ENCODE measurements at regions of chr15 and their contacts with region 1.

Region 1: DNA sequence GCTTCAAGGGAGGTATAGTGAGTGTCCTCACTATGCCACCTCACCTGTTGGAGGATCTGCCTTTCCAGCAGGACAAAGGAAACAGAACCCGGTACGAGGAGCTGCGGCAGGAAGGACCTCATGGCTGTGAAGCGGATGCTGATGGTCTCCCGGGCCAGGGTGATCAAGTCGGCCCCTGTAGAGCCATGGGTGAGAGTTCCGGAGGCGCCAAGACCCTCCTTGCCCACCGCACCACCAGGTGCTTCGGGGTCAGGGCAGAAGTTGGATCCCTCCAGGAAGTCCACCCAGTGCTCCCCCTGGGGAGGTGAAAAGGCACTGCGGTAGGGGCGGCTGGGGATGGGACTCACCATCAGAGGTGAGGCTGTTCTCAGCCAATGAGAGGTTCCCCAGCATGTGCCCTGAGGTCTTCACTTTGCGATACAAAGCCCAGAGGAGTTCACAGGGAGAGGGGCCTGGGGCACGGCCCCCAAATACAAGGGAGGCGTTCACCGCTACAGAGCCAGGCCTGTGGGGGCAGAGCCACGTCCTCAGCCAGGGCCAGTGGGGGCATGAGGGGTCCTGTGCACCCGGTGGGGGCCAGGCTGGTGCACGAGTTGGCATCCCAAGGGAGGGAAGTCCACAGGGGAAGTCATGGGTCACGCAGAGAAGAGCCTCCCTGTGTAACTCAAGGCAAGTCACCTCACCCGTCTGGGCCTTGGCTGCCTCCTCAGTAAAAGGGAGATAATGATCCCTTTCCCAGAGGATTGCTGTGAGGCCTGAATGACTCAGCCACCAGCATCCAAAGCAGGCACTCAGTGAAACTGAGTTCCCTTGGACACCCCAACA is 27.7 kb downstream of the C15orf39 start:
- DNase-seq: peak; percentile 35 to 69
- ATAC-seq: no peak
- H3K4me3 ChIP-seq: no peak overlapping the region
- H3K27ac ChIP-seq: no peak overlapping the region
- H3K4me1 ChIP-seq: no peaks in the 10 kb centered on the region
- H3K27me3 ChIP-seq: no peaks in the 10 kb centered on the region

Region 2: DNA sequence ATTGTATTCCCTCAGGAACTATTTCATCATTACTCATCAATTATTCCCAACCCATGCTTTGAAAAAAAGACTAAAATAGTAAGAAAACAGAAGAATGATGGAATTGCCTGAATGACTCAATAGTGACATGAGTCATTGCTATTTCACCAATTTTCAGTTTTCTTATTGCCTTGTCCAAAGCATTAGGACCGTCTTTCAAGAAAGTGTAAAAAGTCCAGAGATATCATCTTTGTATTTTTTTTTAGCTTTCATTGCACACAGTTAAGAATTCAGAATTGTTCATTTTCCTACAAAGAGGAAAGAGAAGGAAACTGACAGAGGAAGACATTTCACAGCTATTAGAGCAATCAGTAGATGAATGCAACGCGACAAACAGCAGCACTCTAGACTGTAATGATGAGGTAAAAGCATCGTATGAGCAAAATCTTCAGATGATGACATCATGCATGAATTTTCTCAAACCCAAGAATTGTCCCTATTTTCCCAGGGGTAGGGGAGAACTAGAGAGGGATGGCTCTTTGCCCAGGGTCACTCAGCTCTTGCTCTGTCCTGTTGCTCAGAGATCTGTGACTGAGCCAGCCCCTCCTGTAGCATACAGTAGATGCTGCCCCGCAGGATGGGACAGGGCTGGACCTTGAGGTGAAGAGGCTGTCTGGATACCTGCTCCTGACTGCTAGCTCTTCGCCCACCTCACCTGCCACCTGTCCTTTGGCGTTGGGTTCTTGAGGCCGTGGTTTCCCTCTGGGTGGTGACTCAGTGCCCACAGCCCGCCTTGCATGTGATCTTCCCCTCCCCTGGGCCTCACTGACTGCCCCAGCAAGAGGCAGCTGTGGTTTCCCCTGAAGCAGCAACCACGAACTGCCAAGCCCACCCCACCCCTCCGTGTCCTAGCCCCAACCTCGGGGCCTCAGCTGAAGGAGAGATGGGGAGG is 121.2 kb before region 1 on chr15:
- intact Hi-C with region 1: no loop called
- DNase-seq: peak in 1 of 2 donors; percentile 66
- ATAC-seq: no peak
- H3K4me3 ChIP-seq: no peak overlapping the region
- H3K27ac ChIP-seq: no peak overlapping the region
- H3K4me1 ChIP-seq: no peaks in the 10 kb centered on the region
- H3K27me3 ChIP-seq: no peaks in the 10 kb centered on the region

Region 3: GRCh38 chr15:75195122-75195765 is 34.2 kb before region 1 on chr15:
- intact Hi-C with region 1: no loop called
- DNase-seq: no peak
- ATAC-seq: no peak
- H3K4me3 ChIP-seq: no peak overlapping the region
- H3K27ac ChIP-seq: no peak overlapping the region
- H3K4me1 ChIP-seq: no peaks in the 10 kb centered on the region
- H3K27me3 ChIP-seq: no peaks in the 10 kb centered on the region

Region 4: GRCh38 chr15:75309711-75310110 is 80.3 kb after region 1 on chr15:
- intact Hi-C with region 1: loop called in 1 of 2 experiments (anchors 10 kb)
- DNase-seq: no peak
- ATAC-seq: no peak
- H3K4me3 ChIP-seq: no peak overlapping the region
- H3K27ac ChIP-seq: no peak overlapping the region
- H3K4me1 ChIP-seq: no peaks in the 10 kb centered on the region
- H3K27me3 ChIP-seq: peaks cover 0 to 2% of the 10 kb centered on the region in 2 donors

Region 5: DNA sequence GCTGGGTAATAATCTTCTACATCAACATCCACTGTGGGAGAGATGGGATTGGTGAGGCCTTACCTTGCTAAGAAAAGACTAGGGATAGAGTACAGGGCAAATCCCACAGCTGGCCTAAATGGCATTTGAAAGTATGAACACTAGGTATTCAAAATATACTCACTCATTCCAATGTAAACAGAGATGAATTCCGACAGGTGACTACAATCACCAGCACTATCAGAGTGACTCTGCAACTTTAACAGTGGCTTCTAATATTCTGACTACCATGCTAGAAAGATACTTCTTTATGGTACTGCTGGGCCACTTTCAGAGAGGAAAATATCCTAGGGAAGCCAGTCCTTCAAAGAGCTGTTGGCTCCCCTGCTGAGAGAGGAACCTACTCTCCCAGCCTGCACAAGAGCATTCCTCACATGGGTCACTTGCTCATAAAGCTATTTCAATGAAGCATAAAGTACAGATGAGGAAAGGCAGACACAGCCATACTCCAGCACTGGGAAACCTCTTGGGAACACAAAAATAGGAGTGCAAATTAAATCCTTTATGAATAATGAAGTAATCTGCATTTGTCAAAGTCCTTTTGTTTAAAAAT is 160.5 kb after region 1 on chr15:
- intact Hi-C with region 1: no loop called
- DNase-seq: no peak
- ATAC-seq: no peak
- H3K4me3 ChIP-seq: no peak overlapping the region
- H3K27ac ChIP-seq: no peak overlapping the region
- H3K4me1 ChIP-seq: no peaks in the 10 kb centered on the region
- H3K27me3 ChIP-seq: no peaks in the 10 kb centered on the region

Region 6: GRCh38 chr15:75508840-75509532 is 279.6 kb after region 1 on chr15:
- intact Hi-C with region 1: no loop called
- DNase-seq: no peak
- ATAC-seq: no peak
- H3K4me3 ChIP-seq: no peak overlapping the region
- H3K27ac ChIP-seq: no peak overlapping the region
- H3K4me1 ChIP-seq: no peaks in the 10 kb centered on the region
- H3K27me3 ChIP-seq: no peaks in the 10 kb centered on the region

Measured in aorta (tissue), 5 donors.